ENCODE measurements at regions of chr12 and their contacts with region 1.

Region 1: DNA sequence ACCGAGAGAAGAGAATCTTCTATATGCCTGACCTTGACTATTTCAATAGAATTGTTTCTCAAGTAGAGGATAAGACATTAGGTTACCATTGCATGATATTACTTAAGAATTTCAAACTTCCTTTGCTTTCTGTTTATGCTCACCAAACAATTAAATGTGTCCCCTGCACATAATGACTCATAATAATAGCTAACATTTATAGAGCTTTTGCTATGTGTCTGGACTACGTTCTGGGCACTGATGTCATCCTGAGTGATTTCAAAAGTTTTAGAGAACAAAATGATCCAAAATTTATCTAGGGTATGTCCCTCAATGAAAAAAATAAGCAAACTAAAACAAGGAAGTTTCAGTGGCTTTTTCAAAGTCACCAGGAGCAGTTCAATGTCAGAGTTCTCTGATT is 38.8 kb downstream of the SLC15A5 start:
- DNase-seq: no peak
- ATAC-seq: no peak
- H3K4me3 ChIP-seq: no peak overlapping the region
- H3K27ac ChIP-seq: no peak overlapping the region
- H3K4me1 ChIP-seq: no peaks in the 10 kb centered on the region
- H3K27me3 ChIP-seq: no peaks in the 10 kb centered on the region
- CTCF ChIP-seq: no peak
- EP300 ChIP-seq: no peak
- POLR2A ChIP-seq: no peak
- RAD21 ChIP-seq: no peak

Region 2: DNA sequence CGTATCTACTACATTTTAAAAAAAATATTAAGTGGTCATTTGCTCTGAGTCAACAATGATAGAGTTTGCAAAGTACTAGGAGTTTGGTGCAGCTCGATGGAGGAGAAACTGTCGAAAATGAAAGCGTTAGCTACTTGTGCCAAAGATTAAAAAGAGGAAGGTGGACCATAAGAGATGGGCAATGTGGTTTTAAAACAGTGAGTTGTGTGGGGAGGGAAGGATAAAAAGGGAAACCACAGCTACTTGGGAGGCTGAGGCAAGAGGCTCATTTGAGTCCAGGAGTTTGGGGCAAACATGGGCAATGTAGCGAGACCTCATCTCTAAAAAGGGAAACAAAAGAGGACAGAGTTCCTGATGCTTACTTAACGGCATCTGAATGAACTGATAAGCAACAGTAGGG is 374.7 kb before region 1 on chr12:
- CTCF ChIA-PET with region 1: no interaction called
- POLR2A ChIA-PET with region 1: no interaction called
- in situ Hi-C with region 1: no loop called
- intact Hi-C with region 1: no loop called
- DNase-seq: no peak
- ATAC-seq: no peak
- H3K4me3 ChIP-seq: no peak overlapping the region; a peak in 1 of 6 replicates
- H3K27ac ChIP-seq: no peak overlapping the region
- H3K4me1 ChIP-seq: peaks cover 37% of the 10 kb centered on the region
- H3K27me3 ChIP-seq: no peaks in the 10 kb centered on the region
- CTCF ChIP-seq: no peak
- EP300 ChIP-seq: no peak
- POLR2A ChIP-seq: no peak
- RAD21 ChIP-seq: no peak

Region 3: GRCh38 chr12:16282978-16283377 is 44.3 kb after region 1 on chr12:
- CTCF ChIA-PET with region 1: no interaction called
- POLR2A ChIA-PET with region 1: no interaction called
- in situ Hi-C with region 1: no loop called
- intact Hi-C with region 1: loop called (anchors 1 kb)
- DNase-seq: no peak
- ATAC-seq: no peak
- H3K4me3 ChIP-seq: no peak overlapping the region
- H3K27ac ChIP-seq: no peak overlapping the region
- H3K4me1 ChIP-seq: no peaks in the 10 kb centered on the region
- H3K27me3 ChIP-seq: no peaks in the 10 kb centered on the region
- CTCF ChIP-seq: no peak
- EP300 ChIP-seq: no peak
- POLR2A ChIP-seq: no peak
- RAD21 ChIP-seq: no peak